Endothelial cell of umbilical vein (primary cell): ENCODE measurements at regions of chr7 and their contacts with region 1.

Region 1: DNA sequence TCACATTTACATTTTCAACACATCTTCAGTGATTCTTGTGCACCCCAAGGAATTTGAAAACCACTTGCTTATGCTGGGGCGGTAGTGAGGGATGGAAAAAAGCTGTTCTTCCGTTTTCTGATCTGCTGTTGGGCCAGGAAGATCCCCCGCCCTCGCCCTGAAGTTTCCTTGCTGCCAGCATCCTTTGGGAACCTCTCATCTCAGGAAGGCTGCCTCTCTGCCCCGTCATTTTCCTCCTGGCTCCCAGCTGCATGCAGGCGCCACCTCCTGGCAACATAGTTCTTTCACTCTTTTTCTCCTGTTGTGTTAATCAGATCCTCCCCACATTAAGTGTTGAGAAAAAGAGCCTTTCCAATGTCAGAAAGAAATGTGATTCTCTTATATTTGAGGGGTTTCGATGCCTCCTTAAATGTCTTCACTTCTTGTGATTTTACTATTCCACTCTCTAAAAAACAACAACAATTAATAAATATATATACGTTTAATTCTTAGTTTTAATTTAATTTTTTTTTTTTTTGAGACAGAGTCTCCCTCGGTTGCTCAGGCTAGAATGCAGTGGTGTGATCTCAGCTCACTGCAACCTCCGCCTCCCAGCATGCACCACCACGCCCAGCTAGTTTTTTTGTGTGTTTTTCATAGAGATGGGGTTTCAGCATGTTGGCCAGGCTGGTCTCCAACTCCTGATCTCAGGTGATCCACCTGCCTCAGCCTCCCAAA is 122.9 kb downstream of the RALA start:
- DNase-seq: peak; percentile 82
- H3K4me3 ChIP-seq: no peak overlapping the region
- H3K27ac ChIP-seq: no peak overlapping the region
- H3K4me1 ChIP-seq: peaks cover 6% of the 10 kb centered on the region
- H3K27me3 ChIP-seq: no peaks in the 10 kb centered on the region
- CTCF ChIP-seq: peak; percentile 75 to 77
- POLR2A ChIP-seq: no peak

Region 2: GRCh38 chr7:39394105-39394680 is 352.1 kb before region 1 on chr7:
- CTCF ChIA-PET with region 1: no interaction called
- POLR2A ChIA-PET with region 1: no interaction called
- dilution Hi-C with region 1: no loop called
- intact Hi-C with region 1: no loop called
- DNase-seq: no peak
- H3K4me3 ChIP-seq: no peak overlapping the region
- H3K27ac ChIP-seq: no peak overlapping the region
- H3K4me1 ChIP-seq: no peaks in the 10 kb centered on the region
- H3K27me3 ChIP-seq: no peaks in the 10 kb centered on the region
- CTCF ChIP-seq: no peak
- POLR2A ChIP-seq: no peak

Region 3: GRCh38 chr7:39453743-39454355 is 292.4 kb before region 1 on chr7:
- CTCF ChIA-PET with region 1: interaction called, 8 read pairs
- POLR2A ChIA-PET with region 1: no interaction called
- dilution Hi-C with region 1: no loop called
- intact Hi-C with region 1: loop called (anchors 1 kb)
- DNase-seq: peak; percentile 66
- H3K4me3 ChIP-seq: no peak overlapping the region
- H3K27ac ChIP-seq: no peak overlapping the region
- H3K4me1 ChIP-seq: no peaks in the 10 kb centered on the region
- H3K27me3 ChIP-seq: peaks cover 6 to 7% of the 10 kb centered on the region in 2 experiments
- CTCF ChIP-seq: peak; percentile 84 to 90
- POLR2A ChIP-seq: no peak

Region 4: GRCh38 chr7:39554583-39555165 is 191.6 kb before region 1 on chr7:
- CTCF ChIA-PET with region 1: no interaction called
- POLR2A ChIA-PET with region 1: no interaction called
- dilution Hi-C with region 1: no loop called
- intact Hi-C with region 1: no loop called
- DNase-seq: no peak
- H3K4me3 ChIP-seq: no peak overlapping the region
- H3K27ac ChIP-seq: no peak overlapping the region
- H3K4me1 ChIP-seq: no peaks in the 10 kb centered on the region
- H3K27me3 ChIP-seq: peaks cover 19% of the 10 kb centered on the region in 2 experiments
- CTCF ChIP-seq: no peak
- POLR2A ChIP-seq: no peak

Region 5: DNA sequence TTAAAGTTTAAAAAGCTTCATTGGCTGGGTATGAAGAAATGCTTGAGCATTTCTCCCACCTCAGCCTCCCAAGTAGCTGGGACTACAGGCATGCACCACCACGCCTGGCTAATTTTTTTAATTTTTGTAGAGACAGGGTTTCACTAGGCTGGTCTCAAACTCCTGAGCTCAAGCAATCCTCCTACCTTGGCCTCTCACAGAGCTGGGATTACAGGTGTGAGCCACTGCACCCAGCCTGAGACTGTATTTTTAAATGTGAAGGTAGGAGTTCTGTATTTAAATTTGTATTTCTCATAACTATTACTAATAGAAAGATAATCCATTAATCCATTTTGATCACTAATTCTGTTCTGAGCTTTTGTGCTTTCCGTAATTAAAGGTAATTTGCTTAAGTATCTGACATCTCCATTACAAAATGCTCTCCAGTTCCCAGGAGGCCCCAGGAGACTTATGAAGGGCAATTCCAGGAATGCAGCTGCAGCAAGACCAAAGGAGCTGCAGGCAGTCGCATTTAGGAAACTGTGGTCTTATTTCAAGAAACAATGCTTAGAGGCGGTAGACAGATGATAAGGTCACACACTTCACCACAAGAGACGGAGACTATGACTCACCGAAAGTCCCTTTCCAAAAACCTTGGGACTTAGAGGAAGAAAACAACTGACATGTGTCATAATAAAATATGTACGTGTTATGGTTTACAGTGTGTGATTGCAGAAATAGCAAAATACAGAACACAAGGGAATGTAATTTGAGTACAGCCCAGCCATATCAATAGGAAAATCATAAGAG is 156.7 kb before region 1 on chr7:
- CTCF ChIA-PET with region 1: interaction called, 10 read pairs
- POLR2A ChIA-PET with region 1: no interaction called
- dilution Hi-C with region 1: no loop called
- intact Hi-C with region 1: no loop called
- DNase-seq: peak; percentile 99
- H3K4me3 ChIP-seq: no peak overlapping the region
- H3K27ac ChIP-seq: peak overlapping the region; percentile 98
- H3K4me1 ChIP-seq: peaks cover 70% of the 10 kb centered on the region
- H3K27me3 ChIP-seq: no peaks in the 10 kb centered on the region
- CTCF ChIP-seq: no peak
- POLR2A ChIP-seq: peak; percentile 38

Region 6: DNA sequence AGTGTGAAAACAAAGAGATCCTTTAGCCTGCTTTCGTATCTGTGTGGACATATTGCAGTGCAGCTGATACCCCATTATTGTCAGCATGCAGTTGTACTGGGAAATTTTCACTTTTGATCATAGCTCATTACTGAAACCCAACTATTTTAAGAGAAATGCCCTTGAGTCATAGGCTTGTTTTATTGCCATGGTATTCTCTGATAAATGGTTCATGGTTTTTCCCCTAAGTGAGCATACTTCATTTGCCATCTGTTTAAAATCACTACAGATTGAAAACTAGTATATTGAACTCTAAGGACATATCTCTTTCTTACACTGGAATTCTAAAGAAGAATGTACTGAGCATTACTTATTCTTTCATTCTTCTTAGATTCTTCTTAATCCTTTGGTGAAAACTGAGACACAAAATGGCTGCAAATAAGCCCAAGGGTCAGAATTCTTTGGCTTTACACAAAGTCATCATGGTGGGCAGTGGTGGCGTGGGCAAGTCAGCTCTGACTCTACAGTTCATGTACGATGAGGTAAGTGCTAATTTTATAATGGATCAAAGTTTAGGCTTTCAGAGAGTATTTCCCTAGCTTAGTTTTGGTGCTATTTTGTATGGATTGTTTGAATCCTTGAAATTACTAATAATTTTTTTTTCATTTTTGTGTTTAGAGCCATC is 59.9 kb before region 1 on chr7:
- CTCF ChIA-PET with region 1: interaction called, 4 read pairs
- POLR2A ChIA-PET with region 1: no interaction called
- dilution Hi-C with region 1: no loop called
- intact Hi-C with region 1: loop called (anchors 5 kb)
- DNase-seq: no peak
- H3K4me3 ChIP-seq: no peak overlapping the region
- H3K27ac ChIP-seq: no peak overlapping the region
- H3K4me1 ChIP-seq: peaks cover 64% of the 10 kb centered on the region
- H3K27me3 ChIP-seq: no peaks in the 10 kb centered on the region
- CTCF ChIP-seq: no peak
- POLR2A ChIP-seq: no peak

Region 7: DNA sequence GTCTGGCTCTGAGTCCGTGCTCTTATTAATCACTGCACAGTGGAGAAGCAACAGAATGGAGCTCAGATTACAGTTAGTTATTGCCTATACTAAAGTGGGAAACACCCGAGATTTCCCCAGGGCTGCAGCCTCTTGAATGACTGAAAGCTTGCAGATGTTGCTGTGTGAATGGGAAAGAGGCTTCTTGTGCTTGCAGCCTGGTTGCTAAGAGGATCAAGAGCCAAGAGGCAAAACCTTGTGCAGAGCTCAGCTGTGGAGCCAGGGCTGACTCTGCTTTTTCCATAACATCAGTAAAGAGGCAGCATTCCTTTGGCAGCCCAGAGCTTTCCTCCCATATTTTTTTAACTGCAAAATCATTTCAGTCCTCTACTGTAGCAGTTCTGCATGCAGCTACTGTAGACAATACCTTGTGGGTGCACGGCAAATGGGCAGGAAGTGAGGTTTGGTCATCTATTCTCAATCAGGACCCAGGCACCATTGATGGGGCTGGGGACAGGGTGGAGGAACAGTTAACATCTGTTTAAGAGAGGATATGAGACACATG is 36.4 kb before region 1 on chr7:
- CTCF ChIA-PET with region 1: interaction called, 13 read pairs
- POLR2A ChIA-PET with region 1: no interaction called
- dilution Hi-C with region 1: no loop called
- intact Hi-C with region 1: loop called (anchors 2 kb)
- DNase-seq: peak; percentile 61
- H3K4me3 ChIP-seq: no peak overlapping the region
- H3K27ac ChIP-seq: no peak overlapping the region
- H3K4me1 ChIP-seq: peaks cover 8% of the 10 kb centered on the region
- H3K27me3 ChIP-seq: no peaks in the 10 kb centered on the region
- CTCF ChIP-seq: no peak
- POLR2A ChIP-seq: peak; percentile 64

Region 8: GRCh38 chr7:39732837-39733804 is 13.1 kb before region 1 on chr7:
- CTCF ChIA-PET with region 1: interaction called, 41 read pairs
- POLR2A ChIA-PET with region 1: no interaction called
- dilution Hi-C with region 1: no loop called
- intact Hi-C with region 1: loop called (anchors 1 kb)
- DNase-seq: peak; percentile 93
- H3K4me3 ChIP-seq: peak overlapping the region; percentile 31 to 46 (median 42)
- H3K27ac ChIP-seq: peak overlapping the region; percentile 84
- H3K4me1 ChIP-seq: peaks cover 23% of the 10 kb centered on the region
- H3K27me3 ChIP-seq: no peaks in the 10 kb centered on the region
- CTCF ChIP-seq: no peak
- POLR2A ChIP-seq: peak; percentile 34

Region 9: DNA sequence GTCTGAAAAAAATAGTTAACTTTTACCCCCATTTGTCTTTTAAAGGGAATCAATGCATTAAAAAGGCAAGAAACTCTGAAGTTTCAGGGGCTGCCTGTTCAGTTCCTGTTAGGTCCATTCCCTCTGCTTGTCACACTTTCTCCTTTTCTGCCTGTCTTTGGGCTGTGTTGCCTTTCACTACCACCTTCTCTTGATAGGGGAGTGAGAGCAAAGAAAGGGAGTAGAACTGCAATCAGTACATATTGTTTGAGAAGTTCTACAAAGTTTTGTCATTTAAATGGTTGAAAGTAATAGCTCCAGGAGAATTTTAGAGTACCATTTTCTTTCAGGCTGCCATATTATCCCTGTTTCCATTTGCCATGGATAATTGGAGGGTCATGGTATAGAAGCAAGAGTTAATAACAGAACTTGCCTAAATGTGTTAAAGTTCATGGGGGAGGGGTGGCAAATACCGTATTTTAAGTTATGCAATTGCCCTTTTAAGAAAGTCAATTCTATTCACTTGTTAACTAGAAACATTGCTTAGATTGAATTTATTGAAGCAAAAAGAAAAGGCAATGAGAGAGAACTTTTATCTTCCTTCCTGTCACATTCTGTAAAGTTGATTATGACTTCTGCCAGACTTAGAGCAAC is 349.6 kb after region 1 on chr7:
- CTCF ChIA-PET with region 1: no interaction called
- POLR2A ChIA-PET with region 1: no interaction called
- dilution Hi-C with region 1: no loop called
- intact Hi-C with region 1: no loop called
- DNase-seq: no peak
- H3K4me3 ChIP-seq: no peak overlapping the region
- H3K27ac ChIP-seq: no peak overlapping the region
- H3K4me1 ChIP-seq: no peaks in the 10 kb centered on the region
- H3K27me3 ChIP-seq: no peaks in the 10 kb centered on the region
- CTCF ChIP-seq: no peak
- POLR2A ChIP-seq: no peak